ENCODE measurements at regions of chr5 and their contacts with region 1.

Region 1: GRCh38 chr5:170338933-170339779 is 41.6 kb upstream of the LCP2 start:
- DNase-seq: no peak
- ATAC-seq: peak; percentile 59
- H3K4me3 ChIP-seq: no peak overlapping the region
- H3K27ac ChIP-seq: no peak overlapping the region
- H3K4me1 ChIP-seq: peaks cover 0 to 62% of the 10 kb centered on the region in 2 donors
- H3K27me3 ChIP-seq: no peaks in the 10 kb centered on the region
- CTCF ChIP-seq: peak; percentile 32 to 60

Region 2: GRCh38 chr5:170278611-170279452 is 60.3 kb before region 1 on chr5:
- intact Hi-C with region 1: loop called in 1 of 2 experiments (anchors 5 kb)
- DNase-seq: peak in 2 of 4 donors; percentile 75 to 89
- ATAC-seq: peak; percentile 64
- H3K4me3 ChIP-seq: peak overlapping the region in 1 of 2 donors; percentile 8
- H3K27ac ChIP-seq: peak overlapping the region in 1 of 2 donors; percentile 80
- H3K4me1 ChIP-seq: peaks cover 8 to 98% of the 10 kb centered on the region in 2 donors
- H3K27me3 ChIP-seq: no peaks in the 10 kb centered on the region
- CTCF ChIP-seq: no peak